ENCODE measurements at regions of chr6 and their contacts with region 1.

Region 1: GRCh38 chr6:27630727-27631608 is 158.1 kb upstream of the ZNF184 start:
- H3K4me3 ChIP-seq: peak overlapping the region; percentile 60
- H3K27ac ChIP-seq: peak overlapping the region; percentile 73; the same call in 1 of the 2 replicates
- H3K4me1 ChIP-seq: peaks cover 8% of the 10 kb centered on the region; the same call in 1 of the 2 replicates
- CTCF ChIP-seq: peak; percentile 64; the same call in 1 of the 2 replicates

Region 2: GRCh38 chr6:27617700-27618689 is 13.0 kb before region 1 on chr6:
- CTCF ChIA-PET with region 1: interaction called, 19 read pairs
- POLR2A ChIA-PET with region 1: interaction called, 19 read pairs
- H3K4me3 ChIP-seq: peak overlapping the region; percentile 68
- H3K27ac ChIP-seq: peak overlapping the region; percentile 62
- H3K4me1 ChIP-seq: no peaks in the 10 kb centered on the region
- CTCF ChIP-seq: peak; percentile 67; the same call in 1 of the 2 replicates

Measured in HEK293 (cell line).